ENCODE measurements at regions of chr12 and their contacts with region 1.

Region 1: DNA sequence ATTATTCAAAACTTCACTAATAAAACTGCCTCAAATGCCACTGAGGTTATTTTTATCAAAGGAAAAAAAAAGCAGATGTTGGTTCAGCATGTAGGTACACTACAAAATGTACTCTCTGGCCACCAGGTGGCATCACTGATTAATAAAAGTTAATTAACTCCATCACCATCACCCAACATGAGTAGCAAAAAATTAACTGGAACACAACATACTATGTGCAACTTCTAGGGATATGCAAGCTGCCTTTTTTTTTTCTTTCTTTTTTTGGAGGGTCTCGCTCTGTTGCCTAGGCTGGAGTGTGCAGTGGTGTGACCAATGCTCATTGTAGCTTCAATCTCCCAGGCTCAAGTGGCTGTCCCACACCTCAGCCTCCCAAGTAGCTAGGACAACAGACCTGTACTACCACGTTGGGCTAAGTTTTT is 43.8 kb upstream of the NR2C1 start:
- DNase-seq: peak; percentile 24 to 80 (median 50)
- ATAC-seq: peak; percentile 86
- H3K4me3 ChIP-seq: no peak overlapping the region
- H3K4me3 Mint-ChIP-seq: no peak overlapping the region
- H3K27ac ChIP-seq: no peak overlapping the region
- H3K27ac Mint-ChIP-seq: no peak overlapping the region
- H3K4me1 ChIP-seq: no peaks in the 10 kb centered on the region
- H3K4me1 Mint-ChIP-seq: no peaks in the 10 kb centered on the region
- H3K27me3 ChIP-seq: no peaks in the 10 kb centered on the region
- H3K27me3 Mint-ChIP-seq: no peaks in the 10 kb centered on the region
- CTCF ChIP-seq: peak; percentile 84

Region 2: DNA sequence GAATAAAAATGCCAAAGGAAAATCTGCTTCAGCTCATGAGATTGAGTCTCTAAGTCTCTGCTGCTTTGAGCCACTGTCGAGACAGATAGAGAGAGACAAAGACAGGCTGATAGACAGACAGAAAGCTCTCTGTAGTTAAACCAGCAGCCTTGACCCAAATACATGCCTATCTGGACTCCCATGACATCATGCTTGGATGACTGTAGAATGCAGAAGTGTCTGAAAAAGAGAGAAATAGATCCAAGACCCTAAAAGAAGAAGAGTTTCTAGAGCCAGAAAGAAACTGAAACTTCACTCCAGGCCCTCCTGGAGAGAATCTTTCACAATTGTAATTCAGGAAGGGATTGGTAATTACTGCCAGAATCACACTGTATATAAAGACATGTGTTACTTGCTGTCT is 1091.4 kb before region 1 on chr12:
- CTCF ChIA-PET with region 1: no interaction called
- POLR2A ChIA-PET with region 1: no interaction called
- intact Hi-C with region 1: no loop called
- DNase-seq: no peak
- ATAC-seq: no peak
- H3K4me3 ChIP-seq: no peak overlapping the region
- H3K4me3 Mint-ChIP-seq: no peak overlapping the region
- H3K27ac ChIP-seq: no peak overlapping the region
- H3K27ac Mint-ChIP-seq: no peak overlapping the region
- H3K4me1 ChIP-seq: peaks cover 9% of the 10 kb centered on the region
- H3K4me1 Mint-ChIP-seq: peaks cover 14% of the 10 kb centered on the region
- H3K27me3 ChIP-seq: no peaks in the 10 kb centered on the region
- H3K27me3 Mint-ChIP-seq: no peaks in the 10 kb centered on the region
- CTCF ChIP-seq: no peak

Region 3: DNA sequence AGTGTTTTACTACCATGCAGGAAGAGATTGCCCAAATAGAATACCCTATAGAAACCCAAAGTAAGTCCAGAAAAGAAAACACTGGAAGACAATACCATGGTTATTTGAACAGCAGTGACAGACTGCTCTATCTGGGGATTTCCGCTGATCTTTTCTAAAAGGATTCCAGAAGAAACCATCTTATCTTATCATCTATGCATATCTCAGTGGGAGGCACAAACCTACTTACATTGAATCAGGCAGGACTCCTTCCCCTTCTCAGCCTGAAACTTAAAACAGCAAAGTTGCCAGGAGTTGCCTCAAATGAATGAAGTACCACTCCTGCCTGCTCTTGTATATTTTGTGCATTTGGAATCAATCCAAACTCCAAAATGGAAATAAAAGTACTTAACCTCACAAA is 12.9 kb after region 1 on chr12:
- CTCF ChIA-PET with region 1: no interaction called
- POLR2A ChIA-PET with region 1: no interaction called
- intact Hi-C with region 1: no loop called
- DNase-seq: no peak
- ATAC-seq: no peak
- H3K4me3 ChIP-seq: no peak overlapping the region
- H3K4me3 Mint-ChIP-seq: no peak overlapping the region
- H3K27ac ChIP-seq: no peak overlapping the region
- H3K27ac Mint-ChIP-seq: no peak overlapping the region
- H3K4me1 ChIP-seq: no peaks in the 10 kb centered on the region
- H3K4me1 Mint-ChIP-seq: no peaks in the 10 kb centered on the region
- H3K27me3 ChIP-seq: no peaks in the 10 kb centered on the region
- H3K27me3 Mint-ChIP-seq: no peaks in the 10 kb centered on the region
- CTCF ChIP-seq: no peak

Region 4: DNA sequence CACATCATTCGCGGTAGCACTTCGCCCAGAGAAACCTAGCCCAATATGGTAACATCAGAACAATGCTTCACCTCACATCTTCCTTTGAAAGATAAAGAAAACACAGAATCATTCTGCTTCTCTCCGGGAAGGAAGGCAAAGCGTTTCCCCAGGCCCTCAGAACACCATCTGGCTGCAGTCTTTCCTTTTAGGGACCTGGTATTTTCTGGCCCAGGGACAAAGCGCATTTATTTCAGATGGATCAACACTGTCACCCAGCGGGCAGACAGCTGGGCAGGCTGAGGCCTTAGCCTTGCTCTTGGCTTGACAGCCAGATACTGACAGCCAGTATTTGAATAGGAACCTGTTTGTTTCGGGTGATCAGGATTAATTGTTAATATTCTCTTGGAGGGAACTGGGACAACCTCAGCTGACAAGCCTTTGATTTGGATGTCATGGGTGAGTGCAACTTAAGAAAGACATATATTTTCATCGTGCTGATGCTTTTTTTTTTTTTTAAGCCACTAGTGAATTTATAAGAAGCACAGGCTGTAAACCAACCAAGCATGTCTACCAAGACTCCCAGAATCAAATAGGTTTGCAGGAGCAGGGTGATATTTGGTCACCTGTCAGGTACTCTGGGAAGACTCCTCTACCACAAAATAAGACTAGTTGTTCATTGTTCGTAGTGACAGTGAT is 219.3 kb after region 1 on chr12:
- CTCF ChIA-PET with region 1: no interaction called
- POLR2A ChIA-PET with region 1: no interaction called
- intact Hi-C with region 1: loop called (anchors 1 to 2 kb)
- DNase-seq: no peak
- ATAC-seq: no peak
- H3K4me3 ChIP-seq: no peak overlapping the region
- H3K4me3 Mint-ChIP-seq: no peak overlapping the region
- H3K27ac ChIP-seq: no peak overlapping the region
- H3K27ac Mint-ChIP-seq: no peak overlapping the region
- H3K4me1 ChIP-seq: no peaks in the 10 kb centered on the region
- H3K4me1 Mint-ChIP-seq: peaks cover 6% of the 10 kb centered on the region
- H3K27me3 ChIP-seq: no peaks in the 10 kb centered on the region
- H3K27me3 Mint-ChIP-seq: no peaks in the 10 kb centered on the region
- CTCF ChIP-seq: no peak

Region 5: GRCh38 chr12:95532851-95533250 is 415.7 kb after region 1 on chr12:
- CTCF ChIA-PET with region 1: interaction called, 30 read pairs
- POLR2A ChIA-PET with region 1: no interaction called
- intact Hi-C with region 1: loop called (anchors 1 kb)
- DNase-seq: no peak
- ATAC-seq: no peak
- H3K4me3 ChIP-seq: no peak overlapping the region
- H3K4me3 Mint-ChIP-seq: no peak overlapping the region
- H3K27ac ChIP-seq: no peak overlapping the region
- H3K27ac Mint-ChIP-seq: no peak overlapping the region
- H3K4me1 ChIP-seq: no peaks in the 10 kb centered on the region
- H3K4me1 Mint-ChIP-seq: peaks cover 5% of the 10 kb centered on the region
- H3K27me3 ChIP-seq: no peaks in the 10 kb centered on the region
- H3K27me3 Mint-ChIP-seq: no peaks in the 10 kb centered on the region
- CTCF ChIP-seq: no peak

Region 6: GRCh38 chr12:95815635-95816212 is 698.5 kb after region 1 on chr12:
- CTCF ChIA-PET with region 1: no interaction called
- POLR2A ChIA-PET with region 1: no interaction called
- intact Hi-C with region 1: loop called in 1 of 2 experiments (anchors 10 kb)
- DNase-seq: peak in 3 of 14 experiments; percentile 11 to 27 (median 14)
- ATAC-seq: no peak
- H3K4me3 ChIP-seq: no peak overlapping the region
- H3K4me3 Mint-ChIP-seq: no peak overlapping the region
- H3K27ac ChIP-seq: no peak overlapping the region
- H3K27ac Mint-ChIP-seq: no peak overlapping the region
- H3K4me1 ChIP-seq: no peaks in the 10 kb centered on the region
- H3K4me1 Mint-ChIP-seq: no peaks in the 10 kb centered on the region
- H3K27me3 ChIP-seq: peaks cover 0 to 6% of the 10 kb centered on the region in 2 experiments
- H3K27me3 Mint-ChIP-seq: peaks cover 50% of the 10 kb centered on the region
- CTCF ChIP-seq: no peak

Region 7: DNA sequence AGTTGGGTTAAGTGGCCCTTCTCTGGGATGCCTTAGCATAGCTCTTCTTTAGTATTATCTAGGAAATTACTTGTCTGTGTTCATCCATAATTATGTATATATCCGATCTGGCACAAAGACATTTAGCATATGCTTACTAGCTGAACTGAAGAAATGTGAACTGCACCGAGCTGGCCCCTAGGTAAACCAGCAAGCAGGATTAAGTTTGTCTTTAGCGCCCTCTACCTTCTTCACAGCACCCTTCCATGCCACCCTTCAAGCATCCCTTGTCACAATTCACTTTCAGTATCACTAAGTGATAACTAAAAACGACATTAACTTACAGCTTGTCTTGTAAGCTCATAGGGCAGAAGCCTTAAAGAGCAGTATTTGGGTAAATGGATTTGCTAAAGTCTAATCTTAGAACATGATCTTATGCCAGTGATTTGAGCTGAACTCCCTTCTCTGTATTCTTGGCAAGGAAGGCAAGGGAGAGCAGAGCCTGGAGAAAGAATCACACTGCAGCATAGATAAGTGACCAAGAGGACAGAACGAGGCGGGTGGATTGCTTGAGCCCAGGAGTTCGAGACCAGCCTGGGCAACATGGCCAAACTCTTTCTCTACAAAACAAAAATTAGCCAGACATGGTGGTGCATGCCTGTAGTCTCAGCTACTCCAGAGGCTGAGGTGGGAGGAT is 881.6 kb after region 1 on chr12:
- CTCF ChIA-PET with region 1: no interaction called
- POLR2A ChIA-PET with region 1: no interaction called
- intact Hi-C with region 1: loop called (anchors 5 to 10 kb)
- DNase-seq: peak in 13 of 14 experiments; percentile 5 to 78 (median 20)
- ATAC-seq: peak; percentile 99
- H3K4me3 ChIP-seq: no peak overlapping the region
- H3K4me3 Mint-ChIP-seq: no peak overlapping the region
- H3K27ac ChIP-seq: no peak overlapping the region
- H3K27ac Mint-ChIP-seq: no peak overlapping the region
- H3K4me1 ChIP-seq: peaks cover 4% of the 10 kb centered on the region
- H3K4me1 Mint-ChIP-seq: no peaks in the 10 kb centered on the region
- H3K27me3 ChIP-seq: no peaks in the 10 kb centered on the region
- H3K27me3 Mint-ChIP-seq: no peaks in the 10 kb centered on the region
- CTCF ChIP-seq: peak; percentile 67

Measured in CD4-positive, alpha-beta T cell (primary cell).